ENCODE measurements at regions of chr22 and their contacts with region 1.

Region 1: DNA sequence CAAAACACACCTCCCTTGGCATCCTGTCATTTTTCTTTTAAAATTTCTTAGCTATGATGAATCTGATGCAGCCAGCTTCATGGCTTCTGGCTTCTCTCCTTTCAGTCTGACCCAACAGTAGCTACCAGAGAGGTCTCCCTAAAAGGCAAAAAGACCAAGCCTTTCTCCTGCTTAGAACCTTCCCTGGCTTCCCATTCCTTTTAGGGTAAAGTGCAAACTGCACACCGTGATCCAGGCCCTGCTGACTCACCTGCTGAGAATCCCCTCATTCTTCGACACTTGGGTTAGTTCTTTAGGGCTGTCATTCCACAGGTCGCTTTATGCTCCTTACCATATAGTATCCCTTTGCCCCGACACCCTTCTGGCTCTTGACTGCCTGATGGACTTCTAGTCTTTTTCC is 362.4 kb downstream of the MIAT start:
- DNase-seq: no peak

Region 2: DNA sequence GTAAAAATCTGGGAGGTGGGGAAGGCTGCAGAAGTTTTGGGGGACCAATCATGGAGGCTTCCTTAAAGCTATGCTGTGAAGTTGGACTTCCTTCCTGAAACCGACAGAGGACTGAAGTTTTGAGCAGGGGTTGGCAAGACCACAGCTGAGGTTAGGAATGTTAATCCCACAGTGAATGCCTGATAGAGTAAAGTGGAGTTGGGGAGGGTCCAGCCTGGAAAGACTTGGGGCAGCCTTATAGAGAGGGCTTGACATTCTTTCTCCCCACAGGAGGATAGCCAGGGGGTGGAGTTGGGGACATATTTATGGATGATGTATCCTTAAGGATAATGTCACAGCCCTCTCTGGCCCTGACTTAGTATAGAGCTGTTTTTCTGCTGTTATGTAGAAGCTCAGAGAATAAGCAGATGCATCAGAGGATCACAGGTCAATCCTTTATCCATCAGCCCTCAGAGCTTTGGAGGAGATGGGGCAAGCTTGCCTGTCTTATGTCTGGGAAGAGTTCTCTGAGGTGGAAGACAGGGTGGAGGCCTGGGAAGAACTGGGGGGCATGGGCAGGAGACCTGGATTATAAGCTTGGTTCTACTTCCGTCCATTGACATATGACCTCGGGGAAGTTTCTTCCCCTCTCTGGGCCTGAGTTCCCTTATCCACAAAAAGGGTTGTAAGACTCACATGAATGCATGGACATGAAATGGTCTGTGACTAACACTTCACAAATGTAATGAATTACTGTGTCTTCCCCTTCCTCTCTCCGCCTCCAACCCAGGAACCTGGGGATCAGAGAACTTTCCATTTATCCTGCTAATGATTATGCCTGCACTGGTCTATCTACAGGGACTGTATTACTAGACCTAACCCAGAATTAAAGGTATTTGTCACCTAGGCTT is 44.7 kb before region 1 on chr22:
- intact Hi-C with region 1: no loop called
- DNase-seq: no peak

Region 3: GRCh38 chr22:27032091-27032761 is 12.4 kb after region 1 on chr22:
- intact Hi-C with region 1: loop called (anchors 1 kb)
- DNase-seq: peak; percentile 49 to 95 (median 74)

Region 4: GRCh38 chr22:27100789-27101188 is 81.0 kb after region 1 on chr22:
- intact Hi-C with region 1: no loop called
- DNase-seq: no peak

Measured in posterior cingulate gyrus (tissue), 11 donors.